Dendritic cell treated with granulocyte-macrophage colony-stimulating factor and Interleukin-4, amounts not matched to agents 40 ng/mL and 50 ng/mL, for 4 days (primary cell): ENCODE measurements at regions of chr6 and their contacts with region 1.

Region 1: DNA sequence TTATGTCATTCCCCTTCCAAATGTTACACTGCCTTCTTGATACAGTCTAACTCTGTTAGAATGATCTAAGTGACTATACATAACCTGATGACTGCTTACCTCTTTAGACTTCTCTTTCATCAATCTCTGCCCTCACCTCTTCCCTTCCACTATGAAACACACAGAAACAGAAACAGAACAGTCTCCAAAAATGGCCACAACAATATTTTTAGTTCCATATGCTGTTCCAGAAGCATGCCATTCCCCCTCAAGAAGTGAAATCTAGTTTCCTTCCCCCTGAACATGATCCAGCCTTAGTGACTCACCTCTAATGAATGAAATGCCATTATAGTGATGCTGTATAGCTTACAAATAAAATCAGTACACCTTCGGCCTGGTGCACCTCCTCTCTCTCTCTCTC is 229.3 kb upstream of the TENT5A start:
- H3K4me3 Mint-ChIP-seq: no peak overlapping the region
- H3K27ac Mint-ChIP-seq: no peak overlapping the region
- H3K4me1 Mint-ChIP-seq: peaks cover 7% of the 10 kb centered on the region
- H3K27me3 Mint-ChIP-seq: no peaks in the 10 kb centered on the region

Region 2: DNA sequence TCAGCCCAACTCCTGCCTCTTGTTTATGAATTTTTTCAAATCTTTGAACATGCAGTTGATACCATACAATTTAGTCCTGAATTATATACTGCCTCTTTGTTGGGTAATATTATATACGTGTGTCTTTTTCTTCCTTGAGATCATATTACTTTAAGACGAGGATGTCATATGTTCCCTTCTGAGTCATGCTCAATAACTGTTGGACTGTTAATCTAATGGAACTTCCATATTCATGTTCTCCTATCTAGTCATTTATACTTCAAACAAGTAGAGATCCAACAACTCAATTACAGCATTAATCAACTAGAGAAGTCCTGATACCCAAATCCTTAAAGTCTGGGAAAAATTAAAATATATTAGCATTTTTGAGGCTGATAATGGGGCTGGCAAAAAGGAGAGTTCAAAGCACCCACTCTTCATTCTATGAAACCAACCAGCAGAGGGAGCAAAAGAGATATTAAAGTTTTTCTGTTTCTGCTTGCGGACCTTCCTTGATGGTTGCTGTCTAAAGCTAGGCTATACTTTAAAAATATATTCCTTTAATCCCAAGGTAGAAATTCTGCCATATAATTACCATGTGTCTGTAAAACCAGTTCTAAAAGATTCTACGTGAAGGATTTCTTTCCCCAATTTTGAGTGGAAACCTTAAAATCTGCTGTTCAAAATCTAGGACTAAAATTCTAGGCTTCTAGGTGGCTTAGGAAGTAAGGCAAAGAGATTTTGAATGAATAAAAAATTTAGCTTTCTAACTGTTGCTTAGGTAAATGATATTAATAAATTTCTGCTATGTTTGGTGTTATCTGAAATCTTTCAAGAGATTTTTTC is 1376.4 kb before region 1 on chr6:
- intact Hi-C with region 1: loop called (anchors 2 kb)
- H3K4me3 Mint-ChIP-seq: no peak overlapping the region
- H3K27ac Mint-ChIP-seq: no peak overlapping the region
- H3K4me1 Mint-ChIP-seq: peaks cover 12% of the 10 kb centered on the region
- H3K27me3 Mint-ChIP-seq: peaks cover 13% of the 10 kb centered on the region

Region 3: GRCh38 chr6:81696482-81696881 is 285.3 kb before region 1 on chr6:
- intact Hi-C with region 1: no loop called
- H3K4me3 Mint-ChIP-seq: no peak overlapping the region
- H3K27ac Mint-ChIP-seq: no peak overlapping the region
- H3K4me1 Mint-ChIP-seq: peaks cover 5% of the 10 kb centered on the region
- H3K27me3 Mint-ChIP-seq: no peaks in the 10 kb centered on the region

Region 4: GRCh38 chr6:81734085-81734484 is 247.7 kb before region 1 on chr6:
- intact Hi-C with region 1: loop called (anchors 1 kb)
- H3K4me3 Mint-ChIP-seq: no peak overlapping the region
- H3K27ac Mint-ChIP-seq: no peak overlapping the region
- H3K4me1 Mint-ChIP-seq: peaks cover 12% of the 10 kb centered on the region
- H3K27me3 Mint-ChIP-seq: no peaks in the 10 kb centered on the region